HEK293 (cell line): ENCODE measurements at regions of chr17 and their contacts with region 1.

Region 1: GRCh38 chr17:71460943-71461342 is 659.9 kb upstream of the SOX9 start:
- H3K4me3 ChIP-seq: no peak overlapping the region
- H3K27ac ChIP-seq: no peak overlapping the region
- H3K4me1 ChIP-seq: no peaks in the 10 kb centered on the region
- CTCF ChIP-seq: no peak

Region 2: DNA sequence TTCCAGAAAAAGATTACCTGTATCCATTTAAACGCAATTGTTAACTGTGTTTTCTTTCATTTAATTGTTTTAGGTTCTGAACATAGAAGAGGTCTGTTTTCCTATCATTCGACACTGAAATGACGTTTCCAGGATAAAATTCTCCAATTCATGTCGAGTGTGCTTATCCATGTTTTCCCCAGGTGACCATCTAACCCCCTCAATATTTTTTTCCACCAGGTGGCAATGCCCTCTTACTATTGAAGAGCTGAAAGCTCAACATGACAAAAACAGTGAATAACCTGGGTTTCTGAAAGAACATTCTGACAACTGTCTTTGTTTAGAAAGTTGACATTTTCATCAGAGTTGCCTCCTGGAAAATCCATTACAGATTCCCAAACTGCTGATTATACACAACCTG is 342.9 kb before region 1 on chr17:
- CTCF ChIA-PET with region 1: interaction called, 10 read pairs
- POLR2A ChIA-PET with region 1: no interaction called
- H3K4me3 ChIP-seq: no peak overlapping the region
- H3K27ac ChIP-seq: no peak overlapping the region
- H3K4me1 ChIP-seq: no peaks in the 10 kb centered on the region
- CTCF ChIP-seq: peak; percentile 52; the same call in 1 of the 2 replicates

Region 3: DNA sequence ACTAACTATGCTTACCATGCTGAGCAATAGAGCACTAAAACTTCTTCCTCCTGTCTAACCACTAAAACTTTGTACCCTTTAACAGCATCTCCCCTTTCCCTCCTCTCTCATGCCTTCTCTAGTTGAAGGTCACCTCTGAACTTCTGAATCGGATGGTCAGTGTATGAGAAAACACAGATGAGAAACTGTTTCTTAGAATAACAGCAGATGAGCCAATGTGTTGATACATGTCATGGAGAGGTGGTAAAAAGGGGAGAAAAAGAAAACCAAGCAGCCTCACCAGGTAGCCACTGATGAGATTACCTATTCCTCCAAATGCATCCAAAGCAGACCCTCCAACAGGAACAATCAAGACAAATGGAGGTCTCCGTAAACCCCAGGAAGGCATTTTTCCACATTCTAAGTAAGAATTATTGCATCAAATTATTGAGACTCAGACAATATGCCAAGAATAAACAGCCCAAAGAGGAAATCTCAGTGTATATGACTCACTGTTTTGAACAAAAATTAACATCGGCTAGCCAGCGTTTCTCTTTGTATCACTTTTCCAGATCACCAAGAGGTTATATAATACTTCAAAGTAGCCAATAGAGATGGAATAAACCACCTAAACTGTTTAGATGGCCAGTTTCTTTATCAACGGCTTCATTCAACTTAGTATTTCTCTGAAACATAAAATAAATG is 133.4 kb before region 1 on chr17:
- CTCF ChIA-PET with region 1: no interaction called
- POLR2A ChIA-PET with region 1: no interaction called
- H3K4me3 ChIP-seq: no peak overlapping the region
- H3K27ac ChIP-seq: no peak overlapping the region
- H3K4me1 ChIP-seq: peaks cover 3% of the 10 kb centered on the region; the same call in 1 of the 2 replicates
- CTCF ChIP-seq: no peak

Region 4: DNA sequence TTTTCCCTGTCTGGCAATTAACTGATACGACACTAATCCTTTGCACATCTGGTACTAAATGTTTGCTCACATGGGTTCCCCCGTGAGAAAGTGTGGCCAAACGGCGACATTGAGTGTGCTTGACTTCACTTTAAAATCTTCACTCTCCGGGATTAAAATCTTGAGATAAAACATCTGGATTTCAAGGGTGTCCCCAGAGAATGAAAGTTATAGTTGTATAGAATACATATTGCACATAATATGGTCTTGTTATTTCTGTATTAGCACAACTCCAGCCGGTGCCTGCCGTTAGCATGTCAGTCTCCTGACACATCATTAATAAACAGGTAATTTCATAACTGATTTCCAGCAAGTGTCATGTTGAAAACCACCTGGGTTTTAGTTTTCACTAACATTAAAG is 89.1 kb before region 1 on chr17:
- CTCF ChIA-PET with region 1: no interaction called
- POLR2A ChIA-PET with region 1: no interaction called
- H3K4me3 ChIP-seq: no peak overlapping the region
- H3K27ac ChIP-seq: no peak overlapping the region
- H3K4me1 ChIP-seq: no peaks in the 10 kb centered on the region
- CTCF ChIP-seq: no peak

Region 5: GRCh38 chr17:71438631-71439146 is 22.3 kb before region 1 on chr17:
- CTCF ChIA-PET with region 1: interaction called, 13 read pairs
- POLR2A ChIA-PET with region 1: no interaction called
- H3K4me3 ChIP-seq: no peak overlapping the region
- H3K27ac ChIP-seq: peak overlapping the region; percentile 48
- H3K4me1 ChIP-seq: peaks cover 19% of the 10 kb centered on the region
- CTCF ChIP-seq: 0 out of 2 replicates have a peak, but pooled peaks have one; percentile 56

Region 6: DNA sequence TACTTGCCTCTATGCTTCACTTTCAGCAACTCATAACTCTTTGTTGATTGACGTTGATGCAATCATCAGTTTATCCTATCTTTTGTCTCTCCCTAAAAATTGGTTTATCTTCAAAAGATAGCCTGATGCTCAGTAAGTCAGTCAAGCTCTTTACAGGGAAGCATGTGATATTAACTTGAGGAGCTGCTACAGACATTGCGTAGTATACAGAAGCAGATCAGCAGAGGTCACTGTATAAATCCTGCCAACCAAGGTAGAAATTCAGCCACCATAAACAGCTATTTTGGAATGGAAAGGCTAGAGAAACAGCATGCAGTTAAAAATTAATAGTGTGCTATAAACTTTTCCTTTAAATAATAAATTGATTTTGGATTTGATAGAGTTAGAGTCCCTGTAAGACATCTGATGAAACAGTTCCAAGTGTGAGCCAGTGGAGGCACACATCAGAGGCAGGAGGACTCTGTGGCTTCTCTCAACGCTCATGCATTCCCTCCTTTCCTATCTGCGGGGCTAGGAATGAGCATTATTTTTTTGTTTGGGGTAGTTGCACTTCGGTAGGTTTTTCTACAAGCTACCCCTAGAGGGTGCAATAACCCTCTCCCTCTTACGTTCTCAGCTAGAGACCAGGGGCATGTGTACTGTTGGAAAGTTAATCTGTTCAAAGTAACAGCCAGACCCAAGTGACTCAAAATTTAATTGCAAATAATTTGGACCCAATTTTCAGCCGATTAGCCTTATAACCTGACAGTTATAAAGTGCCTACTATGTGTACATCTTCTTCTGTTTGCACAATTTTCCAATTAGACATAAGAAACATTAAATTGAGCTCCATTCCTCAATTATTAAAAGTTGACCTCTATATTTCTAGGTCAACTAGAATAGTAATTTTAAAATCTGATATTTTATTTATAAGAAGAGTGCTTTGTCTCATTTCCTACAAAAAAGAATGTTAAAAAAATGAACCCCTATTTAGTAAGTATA is 12.2 kb after region 1 on chr17:
- CTCF ChIA-PET with region 1: interaction called, 17 read pairs
- POLR2A ChIA-PET with region 1: no interaction called
- H3K4me3 ChIP-seq: no peak overlapping the region
- H3K27ac ChIP-seq: no peak overlapping the region
- H3K4me1 ChIP-seq: no peaks in the 10 kb centered on the region; the same call in 1 of the 2 replicates
- CTCF ChIP-seq: peak; percentile 55; the same call in 1 of the 2 replicates

Region 7: DNA sequence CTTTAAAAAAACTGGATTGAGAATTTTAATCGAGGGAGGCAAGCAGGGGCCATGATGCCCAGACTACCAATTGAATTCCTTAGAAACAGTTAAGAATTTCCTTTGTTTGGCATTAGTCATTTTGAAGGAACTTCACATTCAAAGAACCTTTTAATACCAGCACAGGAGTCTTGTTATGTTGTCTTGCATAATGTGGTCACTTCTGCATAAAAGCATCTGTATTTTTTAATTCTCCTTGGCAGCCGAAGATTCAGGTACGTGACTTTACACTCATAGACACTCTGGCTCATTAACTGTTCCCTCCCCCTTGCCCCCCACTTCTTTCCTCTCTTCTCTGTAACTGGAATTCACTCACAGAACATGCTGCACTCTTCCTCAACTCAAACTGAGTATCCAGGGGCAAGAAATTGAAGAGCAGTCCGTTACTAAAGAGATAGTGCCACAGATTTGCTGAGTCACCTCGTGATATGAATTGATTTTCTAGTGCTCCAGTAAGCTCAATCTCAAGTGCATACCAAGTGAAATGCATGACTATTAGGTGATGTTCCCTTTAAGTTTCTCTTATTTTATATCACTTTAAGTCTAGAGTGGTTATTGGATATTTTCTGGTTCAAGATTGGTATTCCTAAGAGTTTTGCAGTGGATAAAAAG is 87.7 kb after region 1 on chr17:
- CTCF ChIA-PET with region 1: no interaction called
- POLR2A ChIA-PET with region 1: no interaction called
- H3K4me3 ChIP-seq: no peak overlapping the region
- H3K27ac ChIP-seq: no peak overlapping the region
- H3K4me1 ChIP-seq: no peaks in the 10 kb centered on the region
- CTCF ChIP-seq: no peak

Region 8: GRCh38 chr17:71938340-71939010 is 477.5 kb after region 1 on chr17:
- CTCF ChIA-PET with region 1: no interaction called
- POLR2A ChIA-PET with region 1: no interaction called
- H3K4me3 ChIP-seq: no peak overlapping the region
- H3K27ac ChIP-seq: no peak overlapping the region
- H3K4me1 ChIP-seq: no peaks in the 10 kb centered on the region
- CTCF ChIP-seq: no peak